Activated CD4-positive, alpha-beta T cell treated with anti-CD3 and anti-CD28 coated beads for 36 hours (primary cell): ENCODE measurements at regions of chr2 and their contacts with region 1.

Region 1: GRCh38 chr2:25878361-25879132 is at the start of gene ASXL2:
- DNase-seq: peak; percentile 99
- ATAC-seq: peak; percentile 87
- H3K4me3 Mint-ChIP-seq: peak within 1 kb of the TSS; percentile 91
- H3K27ac Mint-ChIP-seq: peak within 1 kb of the TSS; percentile 95
- H3K4me1 Mint-ChIP-seq: peaks cover 45% of the 10 kb centered on the region
- H3K27me3 Mint-ChIP-seq: no peaks in the 10 kb centered on the region
- total RNA-seq, gene ASXL2: 36.8 to 46.4 TPM

Region 2: GRCh38 chr2:24886691-24887304 is 991.7 kb before region 1 on chr2:
- CTCF ChIA-PET with region 1: no interaction called
- POLR2A ChIA-PET with region 1: no interaction called
- intact Hi-C with region 1: no loop called
- DNase-seq: no peak
- ATAC-seq: no peak
- H3K4me3 Mint-ChIP-seq: no peak overlapping the region
- H3K27ac Mint-ChIP-seq: no peak overlapping the region
- H3K4me1 Mint-ChIP-seq: peaks cover 13% of the 10 kb centered on the region
- H3K27me3 Mint-ChIP-seq: no peaks in the 10 kb centered on the region

Region 3: DNA sequence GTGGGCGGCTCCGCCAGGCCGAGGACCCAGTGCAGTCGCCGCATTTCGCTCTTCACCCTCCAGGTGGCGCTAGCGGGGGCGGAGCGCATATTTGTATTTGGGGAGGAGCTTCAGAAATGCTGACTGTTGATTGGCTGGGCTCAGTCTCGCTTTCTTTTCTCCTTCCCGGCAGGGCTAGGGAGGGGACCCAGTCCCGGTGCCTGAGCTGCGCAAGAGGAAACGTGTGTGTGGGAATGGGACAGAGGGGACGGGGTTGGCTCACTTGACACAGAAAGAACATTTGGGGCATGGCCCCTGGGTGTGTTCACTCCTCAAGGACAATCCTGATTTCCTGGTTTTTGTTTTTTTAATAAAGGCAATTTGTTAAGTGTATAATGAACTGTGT is 516.5 kb before region 1 on chr2:
- CTCF ChIA-PET with region 1: no interaction called
- POLR2A ChIA-PET with region 1: no interaction called
- intact Hi-C with region 1: loop called in 1 of 2 experiments (anchors 10 kb)
- DNase-seq: peak; percentile 97
- ATAC-seq: peak; percentile 97
- H3K4me3 Mint-ChIP-seq: peak overlapping the region; percentile 79
- H3K27ac Mint-ChIP-seq: peak overlapping the region; percentile 96
- H3K4me1 Mint-ChIP-seq: peaks cover 14% of the 10 kb centered on the region
- H3K27me3 Mint-ChIP-seq: no peaks in the 10 kb centered on the region

Region 4: GRCh38 chr2:25558262-25558661 is 320.3 kb before region 1 on chr2:
- CTCF ChIA-PET with region 1: no interaction called
- POLR2A ChIA-PET with region 1: interaction called, 4 read pairs
- intact Hi-C with region 1: loop called in 1 of 2 experiments (anchors 1 kb)
- DNase-seq: peak; percentile 67
- ATAC-seq: peak; percentile 88
- H3K4me3 Mint-ChIP-seq: no peak overlapping the region
- H3K27ac Mint-ChIP-seq: peak overlapping the region; percentile 74
- H3K4me1 Mint-ChIP-seq: peaks cover 60% of the 10 kb centered on the region
- H3K27me3 Mint-ChIP-seq: no peaks in the 10 kb centered on the region

Region 5: DNA sequence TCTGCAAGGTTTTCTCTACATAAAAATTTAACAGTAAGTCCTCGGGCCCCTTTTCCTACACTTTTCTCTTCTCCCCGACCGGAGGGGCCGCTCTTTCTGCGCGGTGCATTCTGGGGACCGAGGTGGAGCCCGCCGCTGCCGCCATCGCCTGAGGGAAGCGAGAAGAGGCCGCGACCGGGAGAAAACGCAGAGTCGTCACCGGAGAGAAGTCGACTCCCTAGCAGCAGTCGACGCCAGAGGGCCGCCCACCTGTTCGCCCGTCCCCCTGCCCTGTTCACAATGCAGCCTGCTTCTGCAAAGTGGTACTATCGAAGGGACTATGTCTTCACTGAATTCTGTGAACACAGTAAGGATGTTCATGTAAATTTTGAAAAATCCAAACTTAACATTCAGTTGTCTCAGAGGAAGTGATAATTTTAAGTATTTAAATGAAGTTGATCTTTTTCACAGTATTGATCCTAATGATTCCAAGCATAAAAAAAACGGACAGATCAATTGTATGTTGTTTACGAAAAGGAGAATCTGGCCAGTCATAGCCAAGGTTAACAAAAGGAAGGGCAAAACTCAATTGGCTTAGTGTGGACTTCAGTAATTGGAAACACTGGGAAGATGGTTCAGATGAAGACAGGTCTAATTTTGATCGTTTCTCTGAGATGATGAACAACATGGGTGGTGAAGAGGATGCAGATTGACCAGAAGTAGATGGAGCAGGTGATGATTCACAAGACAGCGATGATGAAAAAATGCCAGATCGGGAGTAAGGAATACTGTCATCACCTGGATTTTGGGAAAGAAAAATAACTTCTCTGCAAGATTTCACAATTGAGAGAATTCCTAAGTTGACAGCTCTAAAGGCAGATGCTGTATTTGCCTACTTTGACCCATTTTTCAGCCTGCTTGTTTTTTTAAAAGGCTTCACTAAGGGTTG is 56.1 kb before region 1 on chr2:
- CTCF ChIA-PET with region 1: no interaction called
- POLR2A ChIA-PET with region 1: interaction called, 7 read pairs
- intact Hi-C with region 1: loop called in 1 of 2 experiments (anchors 1 kb)
- DNase-seq: peak; percentile 82
- ATAC-seq: peak; percentile 34
- H3K4me3 Mint-ChIP-seq: peak overlapping the region; percentile 72
- H3K27ac Mint-ChIP-seq: peak overlapping the region; percentile 79
- H3K4me1 Mint-ChIP-seq: peaks cover 69% of the 10 kb centered on the region
- H3K27me3 Mint-ChIP-seq: no peaks in the 10 kb centered on the region

Region 6: GRCh38 chr2:25833566-25833965 is 45.0 kb before region 1 on chr2:
- CTCF ChIA-PET with region 1: no interaction called
- POLR2A ChIA-PET with region 1: no interaction called
- intact Hi-C with region 1: no loop called
- DNase-seq: peak; percentile 40
- ATAC-seq: no peak
- H3K4me3 Mint-ChIP-seq: no peak overlapping the region
- H3K27ac Mint-ChIP-seq: peak overlapping the region; percentile 26
- H3K4me1 Mint-ChIP-seq: peaks cover 57% of the 10 kb centered on the region
- H3K27me3 Mint-ChIP-seq: no peaks in the 10 kb centered on the region

Region 7: DNA sequence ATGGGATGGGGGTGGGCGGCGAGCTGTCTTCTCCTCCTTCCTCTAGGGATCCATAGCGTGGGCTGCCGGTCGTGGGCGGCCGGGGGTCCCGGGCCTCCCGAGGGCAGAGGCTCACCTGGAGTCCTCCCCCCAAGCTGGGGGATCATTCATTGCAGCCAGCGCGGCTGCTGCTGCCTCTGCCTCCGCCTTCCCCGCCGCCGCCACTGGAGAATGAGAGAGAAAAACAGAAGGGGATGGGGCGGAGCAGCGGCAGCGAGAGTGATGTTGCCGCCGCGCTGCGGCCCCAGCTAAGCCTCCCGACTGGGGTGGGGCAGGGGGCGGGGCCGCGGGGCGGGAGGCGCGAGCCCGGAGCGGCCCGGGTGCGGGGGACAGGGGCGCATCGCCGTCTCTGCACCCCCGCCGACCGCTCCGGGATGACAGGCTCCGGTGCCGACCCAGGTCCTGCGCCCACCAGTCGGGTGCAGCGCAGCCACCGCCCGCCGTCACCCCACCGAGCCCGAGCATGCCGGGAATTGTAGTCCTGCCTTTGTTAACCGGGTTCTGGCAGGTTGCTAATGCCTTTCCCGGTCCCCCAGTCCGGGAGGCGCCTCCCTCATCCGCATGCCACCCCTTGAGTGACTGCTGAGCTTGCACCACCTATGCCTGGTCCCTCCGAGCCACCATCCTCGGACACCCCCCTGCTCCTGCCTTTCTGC is 103.9 kb after region 1 on chr2 and contains the start of gene KIF3C:
- CTCF ChIA-PET with region 1: interaction called, 3 read pairs
- POLR2A ChIA-PET with region 1: no interaction called
- intact Hi-C with region 1: loop called in 1 of 2 experiments (anchors 1 kb)
- DNase-seq: peak; percentile 85
- ATAC-seq: peak; percentile 89
- H3K4me3 Mint-ChIP-seq: peak within 1 kb of the TSS; percentile 77
- H3K27ac Mint-ChIP-seq: peak within 1 kb of the TSS; percentile 25
- H3K4me1 Mint-ChIP-seq: peaks cover 4% of the 10 kb centered on the region
- H3K27me3 Mint-ChIP-seq: no peaks in the 10 kb centered on the region
- total RNA-seq, gene KIF3C: 5.2 to 5.3 TPM

Region 8: DNA sequence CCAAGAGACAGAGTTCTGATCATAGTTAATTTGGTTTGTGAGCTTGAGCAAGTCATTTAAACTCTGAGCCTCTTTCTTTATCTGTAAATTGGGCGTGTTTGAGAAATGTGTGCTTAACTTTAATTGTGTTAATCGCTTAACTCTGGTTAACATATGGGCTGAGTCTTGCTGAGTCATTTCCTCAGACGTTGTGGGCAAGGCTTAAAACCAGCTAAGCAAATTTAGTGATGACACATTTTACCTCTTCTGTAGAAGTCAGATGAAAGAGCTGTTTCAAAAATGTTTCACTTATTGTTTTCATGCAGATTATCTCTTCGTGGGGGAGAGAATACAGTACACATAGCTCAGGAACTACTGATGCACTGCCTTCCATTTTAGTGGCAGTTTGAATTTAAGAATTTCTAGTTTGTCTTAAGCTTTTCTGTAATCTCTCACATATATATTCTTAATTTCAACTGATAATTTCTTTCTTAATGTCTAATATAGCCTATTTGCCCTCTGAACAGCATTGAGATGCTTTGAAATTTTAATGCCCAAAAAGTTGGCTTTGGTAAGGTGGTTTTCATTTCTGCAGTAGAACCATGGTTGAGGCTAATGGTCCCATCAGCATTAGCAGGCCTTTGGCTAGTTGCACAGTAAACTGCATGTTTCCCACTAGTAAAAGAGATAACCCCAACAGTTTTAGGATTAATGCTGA is 190.2 kb after region 1 on chr2:
- CTCF ChIA-PET with region 1: no interaction called
- POLR2A ChIA-PET with region 1: interaction called, 4 read pairs
- intact Hi-C with region 1: loop called in 1 of 2 experiments (anchors 5 kb)
- DNase-seq: peak; percentile 73
- ATAC-seq: peak; percentile 96
- H3K4me3 Mint-ChIP-seq: peak overlapping the region; percentile 41
- H3K27ac Mint-ChIP-seq: peak overlapping the region; percentile 89
- H3K4me1 Mint-ChIP-seq: peaks cover 58% of the 10 kb centered on the region
- H3K27me3 Mint-ChIP-seq: no peaks in the 10 kb centered on the region

Region 9: GRCh38 chr2:26764078-26764887 is 885.7 kb after region 1 on chr2 and contains the start of gene SLC35F6:
- CTCF ChIA-PET with region 1: no interaction called
- POLR2A ChIA-PET with region 1: no interaction called
- intact Hi-C with region 1: loop called in 1 of 2 experiments (anchors 5 kb)
- DNase-seq: peak; percentile 91
- ATAC-seq: peak; percentile 95
- H3K4me3 Mint-ChIP-seq: peak within 1 kb of the TSS; percentile 85
- H3K27ac Mint-ChIP-seq: peak within 1 kb of the TSS; percentile 78
- H3K4me1 Mint-ChIP-seq: peaks cover 36% of the 10 kb centered on the region
- H3K27me3 Mint-ChIP-seq: no peaks in the 10 kb centered on the region
- total RNA-seq, gene SLC35F6: 5.0 to 5.6 TPM